CD4-positive, alpha-beta T cell (primary cell): ENCODE measurements at regions of chrX and their contacts with region 1.

Region 1: DNA sequence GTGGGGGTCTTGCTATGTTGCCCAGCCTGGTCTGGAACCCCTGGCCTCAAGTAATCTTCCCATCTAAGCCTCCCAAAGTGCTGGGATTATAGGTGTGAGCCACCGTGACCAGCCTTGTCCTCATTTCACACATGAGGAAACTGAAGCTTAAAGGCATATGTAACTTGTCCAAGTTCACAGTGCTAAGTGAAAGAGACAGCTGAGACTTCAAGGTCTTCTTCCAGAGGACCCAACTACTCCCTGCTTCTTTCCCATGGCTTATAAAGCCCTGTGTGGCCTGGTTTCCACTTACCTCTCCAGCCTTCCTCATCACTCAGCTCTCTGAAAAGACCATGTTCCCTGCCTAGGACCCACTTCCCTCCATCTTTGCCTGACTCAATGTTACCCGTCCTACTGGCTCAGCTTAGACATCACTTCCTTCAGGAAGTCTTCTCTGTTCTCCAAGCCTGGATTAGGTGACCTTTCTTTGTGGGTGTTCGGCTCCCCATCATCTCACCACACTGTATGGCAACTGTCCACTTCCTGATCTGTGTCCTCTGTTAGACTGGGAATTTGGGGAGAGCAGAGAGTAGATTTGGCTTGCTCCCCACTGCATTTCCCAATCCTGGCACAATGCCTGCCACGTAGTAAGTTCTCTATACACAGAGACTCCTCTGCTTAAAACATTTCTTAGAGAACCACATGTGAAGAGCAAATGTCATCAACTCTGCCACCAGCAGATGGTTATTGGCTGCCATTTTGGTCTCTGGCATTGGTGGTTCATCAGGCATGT is 30.4 kb upstream of the LAMP2 start:
- DNase-seq: no peak
- ATAC-seq: no peak
- H3K4me3 ChIP-seq: no peak overlapping the region
- H3K4me3 Mint-ChIP-seq: no peak overlapping the region
- H3K27ac ChIP-seq: no peak overlapping the region
- H3K27ac Mint-ChIP-seq: no peak overlapping the region
- H3K4me1 ChIP-seq: no peaks in the 10 kb centered on the region
- H3K4me1 Mint-ChIP-seq: peaks cover 5% of the 10 kb centered on the region
- H3K27me3 ChIP-seq: no peaks in the 10 kb centered on the region
- H3K27me3 Mint-ChIP-seq: no peaks in the 10 kb centered on the region
- CTCF ChIP-seq: no peak

Region 2: GRCh38 chrX:120457766-120458180 is 41.7 kb before region 1 on chrX:
- CTCF ChIA-PET with region 1: no interaction called
- POLR2A ChIA-PET with region 1: no interaction called
- intact Hi-C with region 1: no loop called
- DNase-seq: peak in 4 of 14 experiments; percentile 10 to 36 (median 25)
- ATAC-seq: peak; percentile 88
- H3K4me3 ChIP-seq: no peak overlapping the region
- H3K4me3 Mint-ChIP-seq: peak overlapping the region; percentile 70
- H3K27ac ChIP-seq: peak overlapping the region in 1 of 2 donors; percentile 34
- H3K27ac Mint-ChIP-seq: peak overlapping the region; percentile 65
- H3K4me1 ChIP-seq: peaks cover 7% of the 10 kb centered on the region
- H3K4me1 Mint-ChIP-seq: peaks cover 60% of the 10 kb centered on the region
- H3K27me3 ChIP-seq: no peaks in the 10 kb centered on the region
- H3K27me3 Mint-ChIP-seq: no peaks in the 10 kb centered on the region
- CTCF ChIP-seq: no peak

Region 3: DNA sequence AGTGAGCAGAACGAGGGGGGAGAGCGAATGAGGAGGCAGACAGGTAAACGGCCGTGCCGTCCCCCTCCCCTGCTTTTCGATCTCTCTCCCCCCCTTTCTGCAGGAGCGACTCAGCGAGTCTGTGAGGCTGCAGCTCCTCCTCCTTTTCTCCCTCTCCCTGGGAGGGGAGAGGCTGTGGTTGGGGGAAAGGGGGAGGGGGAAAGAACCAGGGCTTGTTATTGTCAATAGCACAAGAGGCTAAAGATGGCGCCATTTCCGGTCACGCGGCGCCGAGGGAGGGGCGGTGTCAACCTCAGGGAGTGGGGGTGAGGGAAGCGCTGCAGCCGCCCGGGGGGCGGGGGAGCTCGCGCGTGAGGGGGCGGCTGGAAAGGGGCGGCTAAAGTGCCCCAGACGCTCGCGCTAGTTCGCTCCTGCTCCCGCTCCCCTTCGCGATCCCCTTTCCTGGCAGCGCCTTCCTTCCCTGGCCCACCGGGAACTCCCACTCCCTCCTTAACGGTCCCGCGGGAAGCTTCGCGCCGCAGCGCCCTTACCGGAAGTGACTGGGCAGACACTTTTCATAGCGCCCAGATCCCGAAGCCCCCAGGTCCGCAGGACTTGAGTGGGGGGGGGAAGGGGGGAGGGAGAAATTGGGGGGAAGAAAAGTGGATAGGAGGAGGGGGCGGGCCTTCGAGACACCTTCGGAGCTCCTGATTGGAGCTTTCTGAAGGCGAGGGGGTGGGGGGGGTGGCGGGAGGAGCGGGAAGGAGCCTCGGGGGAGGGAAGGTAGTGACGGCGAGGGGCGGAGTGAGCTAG is 61.6 kb after region 1 on chrX and contains the start of gene CUL4B:
- CTCF ChIA-PET with region 1: no interaction called
- POLR2A ChIA-PET with region 1: no interaction called
- intact Hi-C with region 1: loop called (anchors 5 kb)
- DNase-seq: peak; percentile 81 to 96 (median 88)
- ATAC-seq: peak; percentile 85
- H3K4me3 ChIP-seq: peak within 1 kb of the TSS; percentile 84
- H3K4me3 Mint-ChIP-seq: peak within 1 kb of the TSS; percentile 97
- H3K27ac ChIP-seq: peak within 1 kb of the TSS; percentile 95 to 97
- H3K27ac Mint-ChIP-seq: peak within 1 kb of the TSS; percentile 90
- H3K4me1 ChIP-seq: peaks cover 9% of the 10 kb centered on the region
- H3K4me1 Mint-ChIP-seq: peaks cover 32% of the 10 kb centered on the region
- H3K27me3 ChIP-seq: no peaks in the 10 kb centered on the region
- H3K27me3 Mint-ChIP-seq: no peaks in the 10 kb centered on the region
- CTCF ChIP-seq: no peak
- total RNA-seq, gene CUL4B: 32.1 to 34.1 TPM

Region 4: DNA sequence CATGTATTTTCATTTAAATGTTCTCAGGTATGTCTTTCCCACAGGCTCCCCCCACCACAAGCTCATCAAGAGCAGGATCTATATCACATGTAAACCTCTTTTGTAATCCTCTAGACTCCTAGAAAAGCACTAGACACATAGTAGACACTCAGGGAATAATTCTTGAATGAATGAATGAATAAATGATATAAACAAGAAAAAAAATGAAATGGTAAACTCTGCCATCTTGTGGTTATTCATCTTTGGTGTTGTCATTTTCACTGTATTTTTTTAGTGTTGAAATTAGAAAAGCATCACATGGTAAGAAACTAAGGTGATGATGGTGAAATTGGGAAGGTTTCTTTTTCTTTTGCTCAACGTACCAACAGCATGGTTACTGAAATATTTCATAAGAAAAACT is 164.6 kb after region 1 on chrX:
- CTCF ChIA-PET with region 1: no interaction called
- POLR2A ChIA-PET with region 1: no interaction called
- intact Hi-C with region 1: loop called in 1 of 2 experiments (anchors 2 kb)
- DNase-seq: peak in 3 of 14 experiments; percentile 29 to 43 (median 34)
- ATAC-seq: no peak
- H3K4me3 ChIP-seq: no peak overlapping the region
- H3K4me3 Mint-ChIP-seq: no peak overlapping the region
- H3K27ac ChIP-seq: no peak overlapping the region
- H3K27ac Mint-ChIP-seq: no peak overlapping the region
- H3K4me1 ChIP-seq: no peaks in the 10 kb centered on the region
- H3K4me1 Mint-ChIP-seq: no peaks in the 10 kb centered on the region
- H3K27me3 ChIP-seq: no peaks in the 10 kb centered on the region
- H3K27me3 Mint-ChIP-seq: no peaks in the 10 kb centered on the region
- CTCF ChIP-seq: no peak

Region 5: GRCh38 chrX:120755066-120755846 is 255.8 kb after region 1 on chrX:
- CTCF ChIA-PET with region 1: no interaction called
- POLR2A ChIA-PET with region 1: no interaction called
- intact Hi-C with region 1: loop called in 1 of 2 experiments (anchors 5 kb)
- DNase-seq: peak in 8 of 14 experiments; percentile 2 to 50 (median 21)
- ATAC-seq: peak; percentile 76
- H3K4me3 ChIP-seq: no peak overlapping the region
- H3K4me3 Mint-ChIP-seq: peak overlapping the region; percentile 0
- H3K27ac ChIP-seq: no peak overlapping the region
- H3K27ac Mint-ChIP-seq: peak overlapping the region; percentile 64
- H3K4me1 ChIP-seq: peaks cover 20% of the 10 kb centered on the region
- H3K4me1 Mint-ChIP-seq: peaks cover 48% of the 10 kb centered on the region
- H3K27me3 ChIP-seq: no peaks in the 10 kb centered on the region
- H3K27me3 Mint-ChIP-seq: no peaks in the 10 kb centered on the region
- CTCF ChIP-seq: no peak

Region 6: GRCh38 chrX:120769576-120770341 is 270.3 kb after region 1 on chrX:
- CTCF ChIA-PET with region 1: no interaction called
- POLR2A ChIA-PET with region 1: no interaction called
- intact Hi-C with region 1: loop called (anchors 1 to 2 kb)
- DNase-seq: peak in 4 of 14 experiments; percentile 0 to 45 (median 30)
- ATAC-seq: no peak
- H3K4me3 ChIP-seq: no peak overlapping the region
- H3K4me3 Mint-ChIP-seq: no peak overlapping the region
- H3K27ac ChIP-seq: no peak overlapping the region
- H3K27ac Mint-ChIP-seq: no peak overlapping the region
- H3K4me1 ChIP-seq: no peaks in the 10 kb centered on the region
- H3K4me1 Mint-ChIP-seq: no peaks in the 10 kb centered on the region
- H3K27me3 ChIP-seq: no peaks in the 10 kb centered on the region
- H3K27me3 Mint-ChIP-seq: no peaks in the 10 kb centered on the region
- CTCF ChIP-seq: peak; percentile 41